IMR-90 (cell line): ENCODE measurements at regions of chr6 and their contacts with region 1.

Region 1: GRCh38 chr6:24796616-24797290 is 2.0 kb downstream of the ARMH2 start:
- DNase-seq: no peak
- ATAC-seq: no peak
- H3K4me3 ChIP-seq: no peak overlapping the region
- H3K27ac ChIP-seq: no peak overlapping the region
- H3K4me1 ChIP-seq: peaks cover 2% of the 10 kb centered on the region; the same call in 1 of the 2 replicates
- H3K27me3 ChIP-seq: no peaks in the 10 kb centered on the region
- CTCF ChIP-seq: no peak
- POLR2A ChIP-seq: no peak
- RAD21 ChIP-seq: no peak

Region 2: GRCh38 chr6:25053875-25054371 is 257.2 kb after region 1 on chr6:
- CTCF ChIA-PET with region 1: no interaction called
- POLR2A ChIA-PET with region 1: interaction called, 16 read pairs
- dilution Hi-C with region 1: no loop called
- in situ Hi-C with region 1: no loop called
- intact Hi-C with region 1: no loop called
- DNase-seq: peak; percentile 88
- ATAC-seq: peak; percentile 86
- H3K4me3 ChIP-seq: no peak overlapping the region
- H3K27ac ChIP-seq: peak overlapping the region; percentile 74
- H3K4me1 ChIP-seq: peaks cover 36% of the 10 kb centered on the region
- H3K27me3 ChIP-seq: no peaks in the 10 kb centered on the region
- CTCF ChIP-seq: no peak
- POLR2A ChIP-seq: no peak
- RAD21 ChIP-seq: no peak